PC-9 (cell line): ENCODE measurements at regions of chr3 and their contacts with region 1.

Region 1: GRCh38 chr3:149812606-149813366 is at the start of gene RNF13:
- DNase-seq: peak; percentile 82 to 93
- H3K4me3 ChIP-seq: peak within 1 kb of the TSS; percentile 84
- H3K27ac ChIP-seq: peak within 1 kb of the TSS; percentile 96
- H3K4me1 ChIP-seq: peaks cover 46% of the 10 kb centered on the region
- H3K27me3 ChIP-seq: no peaks in the 10 kb centered on the region
- CTCF ChIP-seq: no peak
- total RNA-seq, gene RNF13: 40.1 and 65.0 TPM in 2 replicates

Region 2: DNA sequence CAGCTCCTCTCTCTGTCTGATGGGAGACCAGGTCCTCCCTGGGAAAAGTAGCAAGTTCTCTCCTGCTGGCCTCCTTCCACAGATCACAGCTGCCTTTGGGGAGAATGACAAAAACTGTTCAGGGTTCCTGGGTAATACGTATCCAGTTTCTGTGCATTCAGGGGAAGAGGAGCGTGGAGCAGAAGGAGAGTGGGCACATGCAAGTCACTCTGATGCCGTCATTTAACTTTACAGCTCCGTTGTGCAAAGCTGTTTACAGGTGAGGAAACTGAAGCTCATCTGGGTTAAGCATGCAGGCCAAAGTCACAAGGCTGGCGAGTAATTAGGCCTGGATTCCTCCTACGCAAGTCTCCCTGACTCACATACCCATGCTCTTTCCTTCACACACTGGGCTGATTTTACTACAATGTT is 427.9 kb before region 1 on chr3:
- CTCF ChIA-PET with region 1: no interaction called
- POLR2A ChIA-PET with region 1: no interaction called
- intact Hi-C with region 1: loop called (anchors 2 kb)
- DNase-seq: peak in 1 of 2 experiments; percentile 66
- H3K4me3 ChIP-seq: no peak overlapping the region
- H3K27ac ChIP-seq: peak overlapping the region; percentile 100
- H3K4me1 ChIP-seq: peaks cover 71% of the 10 kb centered on the region
- H3K27me3 ChIP-seq: no peaks in the 10 kb centered on the region
- CTCF ChIP-seq: no peak

Region 3: DNA sequence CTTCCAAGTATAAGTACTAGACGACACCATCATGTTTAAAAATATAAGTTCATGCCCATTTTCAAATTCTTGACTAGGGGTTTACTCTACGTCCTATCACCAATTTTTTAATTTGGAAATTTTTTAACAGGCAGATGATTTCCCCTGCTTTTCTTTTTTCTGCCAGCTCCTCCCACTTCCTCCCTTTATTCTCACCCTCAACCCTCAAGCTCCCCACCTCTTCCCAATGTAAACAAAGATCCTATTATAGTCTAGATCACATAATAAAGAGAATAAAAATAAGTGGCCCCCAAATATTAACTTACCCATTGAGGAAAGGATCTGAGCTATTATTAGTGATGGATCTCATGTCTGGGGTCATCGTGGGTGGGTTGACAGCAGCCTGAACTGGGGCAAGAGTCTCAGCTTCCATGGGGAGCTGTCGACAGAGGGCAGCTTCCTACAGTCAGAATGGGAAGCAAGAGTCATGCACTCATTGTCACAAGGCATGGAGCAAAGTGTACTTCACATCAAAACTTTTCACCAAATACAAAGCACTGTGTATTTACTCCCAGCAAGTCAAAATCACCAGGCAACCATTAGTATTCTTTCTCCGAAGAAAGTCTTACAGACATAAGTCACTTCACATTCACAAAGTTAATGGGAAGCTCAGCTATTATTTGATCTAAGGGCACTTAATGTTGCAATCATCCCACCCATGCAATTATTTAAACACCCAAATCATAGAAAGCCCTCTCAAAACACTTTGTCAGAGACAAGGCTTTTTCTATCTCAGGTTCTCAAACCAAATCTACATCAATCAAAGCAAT is 285.1 kb before region 1 on chr3:
- CTCF ChIA-PET with region 1: interaction called, 4 read pairs
- POLR2A ChIA-PET with region 1: no interaction called
- intact Hi-C with region 1: loop called (anchors 1 kb)
- DNase-seq: no peak
- H3K4me3 ChIP-seq: no peak overlapping the region
- H3K27ac ChIP-seq: no peak overlapping the region
- H3K4me1 ChIP-seq: no peaks in the 10 kb centered on the region
- H3K27me3 ChIP-seq: no peaks in the 10 kb centered on the region
- CTCF ChIP-seq: no peak

Region 4: DNA sequence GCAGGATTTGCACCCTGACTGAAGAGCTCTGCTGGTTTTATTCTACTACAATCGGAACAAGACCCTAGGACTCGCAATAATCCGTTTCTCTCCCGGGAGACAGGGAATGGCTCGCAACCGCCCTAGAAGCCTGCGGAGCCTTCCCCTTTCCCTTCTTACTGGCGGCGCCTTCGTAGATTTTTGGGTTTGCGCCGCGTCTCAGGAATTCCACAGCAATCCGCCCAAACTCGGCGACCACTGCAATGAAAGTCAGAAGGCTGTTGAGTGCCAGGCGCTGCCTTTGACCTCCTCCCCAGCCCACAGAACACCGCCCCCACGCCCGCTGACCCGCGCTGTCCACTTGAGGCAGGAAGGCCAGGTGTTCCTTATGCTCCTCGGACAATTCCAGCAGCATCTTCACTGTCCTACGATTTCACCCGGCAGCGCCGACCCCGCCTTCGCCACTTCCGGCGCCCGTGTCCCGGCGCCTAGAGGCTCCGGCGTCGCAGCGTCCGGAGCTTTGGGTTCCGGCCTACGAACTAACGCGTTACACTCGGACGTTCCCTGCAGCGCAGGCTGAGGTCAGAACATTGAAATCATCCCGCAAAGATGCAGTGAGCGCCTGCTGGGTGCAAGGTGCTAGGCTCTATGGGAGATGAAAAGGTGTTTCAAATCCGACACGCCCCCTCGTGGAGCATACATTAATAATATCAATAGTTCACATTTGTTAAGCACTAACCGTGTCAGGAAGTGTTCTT is 60.6 kb before region 1 on chr3 and contains the start of gene COMMD2:
- CTCF ChIA-PET with region 1: interaction called, 7 read pairs
- POLR2A ChIA-PET with region 1: no interaction called
- intact Hi-C with region 1: loop called (anchors 5 kb)
- DNase-seq: peak; percentile 79 to 84
- H3K4me3 ChIP-seq: peak within 1 kb of the TSS; percentile 88
- H3K27ac ChIP-seq: peak within 1 kb of the TSS; percentile 51
- H3K4me1 ChIP-seq: peaks cover 17% of the 10 kb centered on the region
- H3K27me3 ChIP-seq: no peaks in the 10 kb centered on the region
- CTCF ChIP-seq: peak; percentile 74
- total RNA-seq, gene COMMD2: 58.2 and 74.7 TPM in 2 replicates

Region 5: GRCh38 chr3:149765762-149766334 is 46.9 kb before region 1 on chr3:
- CTCF ChIA-PET with region 1: interaction called, 56 read pairs
- POLR2A ChIA-PET with region 1: interaction called, 13 read pairs
- intact Hi-C with region 1: loop called (anchors 1 kb)
- DNase-seq: no peak
- H3K4me3 ChIP-seq: no peak overlapping the region
- H3K27ac ChIP-seq: no peak overlapping the region
- H3K4me1 ChIP-seq: no peaks in the 10 kb centered on the region
- H3K27me3 ChIP-seq: no peaks in the 10 kb centered on the region
- CTCF ChIP-seq: peak; percentile 74

Region 6: DNA sequence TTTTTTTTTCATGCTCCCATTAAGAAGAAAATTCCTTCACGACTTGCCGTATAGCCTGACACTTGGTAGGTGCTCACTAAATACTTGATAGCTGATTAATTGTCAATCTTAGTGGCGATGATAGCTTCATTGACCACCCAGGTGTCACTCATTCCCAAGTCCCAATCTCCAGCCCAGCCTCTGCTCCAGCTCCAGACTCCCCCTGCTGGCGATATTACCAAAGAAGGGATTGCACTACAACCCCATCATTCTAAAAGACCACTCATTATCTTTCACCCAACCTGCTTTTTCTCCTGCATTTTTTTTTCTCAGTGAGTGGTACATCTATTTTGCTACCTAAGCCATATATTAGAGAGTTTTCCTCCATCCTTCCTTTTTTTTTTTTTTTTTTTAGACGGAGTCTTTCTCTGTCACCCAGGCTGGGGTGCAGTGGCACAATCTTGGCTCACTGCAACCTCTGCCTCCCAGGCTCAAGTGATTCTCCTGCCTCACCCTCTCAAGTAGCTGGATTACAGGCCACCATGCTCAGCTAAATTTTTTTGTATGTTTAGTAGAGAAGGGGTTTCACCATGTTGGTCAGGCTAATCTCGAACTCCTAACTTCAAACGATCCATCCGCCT is 41.0 kb before region 1 on chr3:
- CTCF ChIA-PET with region 1: interaction called, 56 read pairs
- POLR2A ChIA-PET with region 1: no interaction called
- intact Hi-C with region 1: no loop called
- DNase-seq: peak in 1 of 2 experiments; percentile 43
- H3K4me3 ChIP-seq: no peak overlapping the region
- H3K27ac ChIP-seq: no peak overlapping the region
- H3K4me1 ChIP-seq: no peaks in the 10 kb centered on the region
- H3K27me3 ChIP-seq: no peaks in the 10 kb centered on the region
- CTCF ChIP-seq: peak; percentile 85